ENCODE measurements at regions of chr17 and their contacts with region 1.

Region 1: DNA sequence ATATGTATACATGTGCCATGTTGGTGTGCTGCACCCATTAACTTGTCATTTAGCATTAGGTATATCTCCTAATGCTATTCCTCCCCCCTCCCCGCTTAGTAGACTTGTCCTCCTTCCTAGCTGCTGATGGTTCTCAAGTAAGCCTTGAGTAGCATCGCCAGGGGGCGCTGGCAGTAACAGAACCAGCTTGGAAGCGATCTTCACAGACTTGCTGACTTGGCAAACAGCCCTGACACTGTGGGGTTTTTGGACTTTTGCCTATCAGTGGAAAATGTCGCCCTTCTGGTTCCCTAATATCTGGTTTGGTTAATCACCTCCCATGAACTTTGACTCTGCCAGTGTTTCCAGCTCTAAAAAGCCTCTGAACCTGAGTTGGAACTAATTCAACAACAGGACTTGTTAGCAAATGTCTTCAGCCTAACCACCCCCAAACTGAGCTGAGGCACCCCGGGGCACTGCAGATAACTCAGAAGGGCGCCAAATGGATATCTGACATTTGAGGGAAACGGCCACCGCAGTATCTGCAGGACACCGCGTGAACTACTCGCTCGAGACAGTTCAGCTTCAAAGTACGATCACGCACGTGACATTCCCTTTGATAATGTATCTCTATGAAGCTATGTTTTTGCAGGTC is 15.4 kb upstream of the SPATA32 start:
- DNase-seq: no peak
- H3K4me3 ChIP-seq: no peak overlapping the region
- H3K27ac ChIP-seq: peak overlapping the region; percentile 46
- H3K4me1 ChIP-seq: peaks cover 24% of the 10 kb centered on the region
- H3K27me3 ChIP-seq: no peaks in the 10 kb centered on the region
- CTCF ChIP-seq: peak; percentile 75 to 94 (median 85)
- POLR2A ChIP-seq: no peak

Region 2: GRCh38 chr17:45235416-45236281 is 41.7 kb before region 1 on chr17:
- intact Hi-C with region 1: no loop called
- DNase-seq: no peak
- H3K4me3 ChIP-seq: no peak overlapping the region
- H3K27ac ChIP-seq: no peak overlapping the region
- H3K4me1 ChIP-seq: peaks cover 16% of the 10 kb centered on the region
- H3K27me3 ChIP-seq: no peaks in the 10 kb centered on the region
- CTCF ChIP-seq: peak; percentile 75 to 82 (median 78)
- POLR2A ChIP-seq: no peak

Region 3: GRCh38 chr17:45385331-45385997 is 108.1 kb after region 1 on chr17:
- intact Hi-C with region 1: loop called (anchors 2 kb)
- DNase-seq: no peak
- H3K4me3 ChIP-seq: no peak overlapping the region
- H3K27ac ChIP-seq: no peak overlapping the region
- H3K4me1 ChIP-seq: peaks cover 4% of the 10 kb centered on the region
- H3K27me3 ChIP-seq: no peaks in the 10 kb centered on the region
- CTCF ChIP-seq: peak; percentile 95 to 98 (median 95)
- POLR2A ChIP-seq: no peak

Measured in vagina (tissue), 2 donors.